ENCODE measurements at regions of chr16 and their contacts with region 1.

Region 1: DNA sequence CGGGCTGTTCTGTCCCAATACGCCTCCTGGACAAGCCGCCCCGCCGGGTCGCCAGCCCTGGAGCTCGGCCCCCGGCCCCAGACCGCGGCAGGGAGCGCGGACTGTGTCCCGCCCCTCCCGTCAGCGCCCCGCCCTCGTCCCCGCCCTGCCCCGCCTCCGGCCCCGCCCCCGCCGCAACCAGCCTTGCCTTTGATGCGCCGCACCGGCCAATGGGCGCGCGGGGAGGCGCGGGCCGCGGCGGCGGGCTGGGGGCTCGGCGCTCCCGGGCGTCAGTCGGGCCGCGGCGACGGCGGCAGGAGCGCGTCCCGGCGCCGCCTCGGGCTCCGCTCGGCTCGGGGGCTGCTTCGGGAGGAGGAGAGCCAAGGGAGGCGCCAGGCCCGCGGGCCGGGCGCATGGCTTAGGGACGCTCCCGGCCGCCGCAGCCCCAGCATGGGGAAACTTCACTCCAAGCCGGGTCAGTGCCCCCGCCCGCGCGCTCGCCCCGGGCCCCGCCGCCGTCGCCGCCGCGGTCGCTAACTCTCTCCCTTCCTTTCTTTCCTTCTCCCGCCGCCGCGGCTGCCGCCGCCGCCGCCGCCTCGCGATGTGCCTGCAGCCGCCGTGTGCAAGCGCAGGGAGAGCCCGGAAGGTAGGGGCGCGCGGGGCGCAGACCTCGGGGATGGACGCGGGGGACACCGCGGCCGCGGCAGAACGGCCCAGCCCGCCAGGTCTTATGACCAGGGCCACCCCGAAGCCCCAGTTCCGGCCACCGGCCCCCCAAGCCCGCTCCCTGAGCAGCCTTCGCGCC is at the start of gene NKD1:
- DNase-seq: peak; percentile 72
- ATAC-seq: peak; percentile 88
- H3K4me3 Mint-ChIP-seq: peak within 1 kb of the TSS; percentile 91
- H3K27ac Mint-ChIP-seq: peak within 1 kb of the TSS; percentile 70
- H3K4me1 Mint-ChIP-seq: peaks cover 7% of the 10 kb centered on the region
- H3K27me3 Mint-ChIP-seq: peaks cover 10% of the 10 kb centered on the region
- CTCF ChIP-seq: no peak
- total RNA-seq, gene NKD1: 0.49 and 1.5 TPM in 2 replicates

Region 2: DNA sequence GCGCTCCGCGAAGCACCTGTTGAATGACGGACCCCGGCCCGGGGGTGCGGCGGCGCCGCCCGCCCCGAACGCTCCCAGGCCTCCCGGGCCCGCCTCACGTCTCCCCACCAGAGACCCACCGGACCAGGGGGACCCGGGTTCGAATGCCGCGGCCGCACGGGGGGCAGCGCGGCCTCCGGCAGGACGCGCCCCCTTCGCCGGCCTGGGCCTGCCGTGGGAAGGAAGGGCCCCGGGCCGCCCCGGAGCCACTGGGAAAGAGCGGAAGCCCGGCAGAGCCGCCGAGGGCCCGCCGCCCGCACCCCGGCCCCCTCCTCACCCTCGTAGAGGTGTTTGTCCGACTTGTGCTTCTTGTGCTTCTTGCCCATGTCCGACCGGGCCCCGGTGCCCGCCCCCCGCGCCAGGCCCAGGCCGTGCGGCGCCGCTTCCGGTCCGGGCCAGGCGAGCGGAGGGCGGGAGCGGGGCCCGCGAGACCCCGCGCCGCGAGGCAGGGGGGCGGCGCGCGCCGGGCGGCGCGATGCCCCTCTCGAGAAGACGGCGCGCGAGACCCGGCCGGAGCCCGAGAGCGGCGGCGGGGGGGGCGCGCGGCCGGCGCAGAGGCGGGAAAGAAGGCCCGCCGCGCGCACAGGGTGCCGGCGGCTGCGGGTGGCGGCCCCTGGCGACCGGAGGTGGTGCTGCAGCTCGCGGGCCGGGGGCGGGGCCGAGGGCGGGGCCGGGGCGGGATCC is 179.7 kb before region 1 on chr16 and contains the start of gene BRD7:
- CTCF ChIA-PET with region 1: no interaction called
- POLR2A ChIA-PET with region 1: no interaction called
- intact Hi-C with region 1: loop called (anchors 1 kb)
- DNase-seq: peak; percentile 79
- ATAC-seq: peak; percentile 89
- H3K4me3 Mint-ChIP-seq: peak within 1 kb of the TSS; percentile 92
- H3K27ac Mint-ChIP-seq: peak within 1 kb of the TSS; percentile 90
- H3K4me1 Mint-ChIP-seq: peaks cover 47% of the 10 kb centered on the region
- H3K27me3 Mint-ChIP-seq: peaks cover 4% of the 10 kb centered on the region
- CTCF ChIP-seq: no peak
- total RNA-seq, gene BRD7: 60.3 and 65.2 TPM in 2 replicates

Region 3: DNA sequence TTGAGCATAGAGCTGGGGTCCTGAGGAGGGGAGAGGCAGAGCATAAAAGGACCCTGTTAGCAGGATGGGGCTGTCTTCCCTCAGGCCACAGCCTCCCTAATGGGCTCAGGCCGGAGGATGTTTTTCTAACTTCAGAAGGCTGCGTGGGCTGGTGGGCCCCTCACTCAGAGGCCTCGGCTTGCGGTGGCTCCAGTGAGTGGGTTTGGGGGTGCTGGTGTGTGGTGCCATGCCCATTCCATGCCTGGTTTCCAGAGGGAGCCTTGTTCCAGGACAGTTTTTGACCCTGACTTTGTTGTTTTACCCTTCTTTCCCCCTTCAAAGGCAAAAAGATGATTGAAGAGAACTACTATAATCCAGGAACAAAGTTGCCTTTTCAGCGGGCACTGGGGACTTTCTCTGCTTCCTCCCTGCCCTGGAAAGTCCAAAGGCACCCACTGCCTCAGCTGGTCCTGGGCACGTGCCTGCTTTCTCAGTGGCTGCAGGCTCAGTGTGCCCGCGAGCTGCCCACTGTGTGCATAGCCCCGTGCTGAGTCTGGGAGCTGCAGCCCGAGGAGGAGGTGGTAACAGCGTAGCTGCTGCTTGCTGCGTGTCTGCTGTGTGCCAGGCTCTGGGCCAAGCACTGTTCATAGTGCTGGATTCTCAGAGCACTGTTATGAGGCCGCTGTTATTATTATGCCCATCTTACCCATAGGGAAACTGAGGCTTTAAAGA is 11.6 kb after region 1 on chr16:
- CTCF ChIA-PET with region 1: no interaction called
- POLR2A ChIA-PET with region 1: no interaction called
- intact Hi-C with region 1: no loop called
- DNase-seq: no peak
- ATAC-seq: no peak
- H3K4me3 Mint-ChIP-seq: no peak overlapping the region
- H3K27ac Mint-ChIP-seq: no peak overlapping the region
- H3K4me1 Mint-ChIP-seq: peaks cover 4% of the 10 kb centered on the region
- H3K27me3 Mint-ChIP-seq: peaks cover 4% of the 10 kb centered on the region
- CTCF ChIP-seq: no peak

Region 4: DNA sequence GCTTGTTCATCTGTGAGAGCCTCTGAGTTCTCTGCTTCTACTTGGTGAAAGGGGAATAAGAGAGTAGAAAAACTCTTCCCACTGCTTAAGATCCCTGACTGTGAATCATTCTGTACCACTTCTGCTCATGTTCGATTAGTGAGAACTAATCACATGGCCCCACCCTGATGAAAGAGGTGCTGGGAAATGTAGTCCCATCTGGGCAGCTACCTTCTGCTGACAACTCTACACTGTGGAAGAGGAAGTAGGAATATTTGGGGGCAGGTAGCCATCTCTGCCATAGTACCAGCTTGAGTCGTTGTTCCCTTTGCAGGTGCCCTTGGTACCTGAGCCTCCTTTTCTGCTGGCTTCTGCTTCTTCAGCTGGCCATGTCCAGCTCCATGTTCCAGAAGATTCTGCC is 29.8 kb after region 1 on chr16:
- CTCF ChIA-PET with region 1: no interaction called
- POLR2A ChIA-PET with region 1: no interaction called
- intact Hi-C with region 1: no loop called
- DNase-seq: no peak
- ATAC-seq: peak; percentile 96
- H3K4me3 Mint-ChIP-seq: no peak overlapping the region
- H3K27ac Mint-ChIP-seq: no peak overlapping the region
- H3K4me1 Mint-ChIP-seq: peaks cover 7% of the 10 kb centered on the region
- H3K27me3 Mint-ChIP-seq: no peaks in the 10 kb centered on the region
- CTCF ChIP-seq: no peak

Region 5: DNA sequence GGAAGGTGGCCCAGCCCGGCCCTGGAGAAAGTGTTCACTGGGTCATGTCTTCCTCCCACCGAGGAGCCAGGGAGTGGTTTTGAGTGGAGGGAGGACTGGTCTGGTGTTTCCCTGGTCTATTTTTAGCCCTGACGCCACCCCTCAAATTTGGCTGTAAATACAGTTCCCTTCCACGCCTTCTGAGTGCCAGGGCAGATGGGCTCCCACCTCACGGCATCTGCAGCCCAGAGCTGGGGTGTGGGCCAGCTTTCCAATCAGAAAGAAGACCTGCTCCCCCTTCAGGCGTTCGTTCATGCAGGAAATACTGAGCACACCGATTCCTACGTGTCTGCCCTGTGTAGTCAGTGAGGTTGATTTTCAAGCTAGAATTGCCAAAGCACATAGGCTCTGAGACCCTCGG is 79.1 kb after region 1 on chr16:
- CTCF ChIA-PET with region 1: interaction called, 4 read pairs
- POLR2A ChIA-PET with region 1: no interaction called
- intact Hi-C with region 1: loop called (anchors 1 kb)
- DNase-seq: no peak
- ATAC-seq: peak; percentile 62
- H3K4me3 Mint-ChIP-seq: peak overlapping the region; percentile 35
- H3K27ac Mint-ChIP-seq: no peak overlapping the region
- H3K4me1 Mint-ChIP-seq: peaks cover 10% of the 10 kb centered on the region
- H3K27me3 Mint-ChIP-seq: no peaks in the 10 kb centered on the region
- CTCF ChIP-seq: no peak

Region 6: GRCh38 chr16:50665128-50665878 is 117.0 kb after region 1 on chr16:
- CTCF ChIA-PET with region 1: interaction called, 12 read pairs
- POLR2A ChIA-PET with region 1: interaction called, 3 read pairs
- intact Hi-C with region 1: loop called (anchors 1 kb)
- DNase-seq: peak; percentile 68
- ATAC-seq: peak; percentile 70
- H3K4me3 Mint-ChIP-seq: peak overlapping the region; percentile 81
- H3K27ac Mint-ChIP-seq: peak overlapping the region; percentile 65
- H3K4me1 Mint-ChIP-seq: peaks cover 23% of the 10 kb centered on the region
- H3K27me3 Mint-ChIP-seq: no peaks in the 10 kb centered on the region
- CTCF ChIP-seq: no peak

Region 7: DNA sequence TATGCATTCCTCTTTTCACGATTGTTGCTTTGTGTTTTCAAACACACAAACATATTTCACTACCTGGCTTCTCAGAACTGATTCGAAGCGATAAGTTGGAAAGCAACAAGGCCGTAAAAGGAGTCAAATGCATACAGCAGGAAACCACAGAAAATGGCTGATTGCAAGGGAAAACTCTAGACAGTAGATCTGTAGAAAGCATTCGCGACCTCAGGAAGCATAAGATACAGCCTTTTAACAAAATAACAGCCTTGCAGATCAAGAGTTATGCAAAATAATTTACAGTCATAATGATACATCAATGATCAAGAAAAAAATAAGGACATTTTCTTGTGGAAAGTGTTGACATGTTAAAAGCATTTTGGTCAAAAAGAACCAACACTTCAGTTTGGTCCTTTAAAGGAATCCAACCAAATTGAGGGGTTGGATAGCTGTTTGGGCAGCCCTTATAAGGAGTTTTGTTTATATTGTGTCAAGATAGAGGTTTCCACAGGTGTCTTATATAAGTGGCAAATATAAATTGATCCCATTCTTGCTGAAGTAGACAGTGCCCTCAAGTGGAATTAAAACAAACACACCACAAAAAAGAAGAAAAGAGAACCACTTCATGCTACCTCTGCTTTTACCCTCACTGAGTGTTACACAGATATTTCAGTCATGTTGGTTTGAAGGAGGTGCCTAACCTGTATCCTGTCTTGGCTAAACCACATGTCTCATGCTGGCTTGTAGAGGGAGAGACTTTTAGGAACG is 199.1 kb after region 1 on chr16:
- CTCF ChIA-PET with region 1: interaction called, 3 read pairs
- POLR2A ChIA-PET with region 1: no interaction called
- intact Hi-C with region 1: loop called (anchors 1 kb)
- DNase-seq: no peak
- ATAC-seq: peak; percentile 61
- H3K4me3 Mint-ChIP-seq: peak overlapping the region; percentile 45
- H3K27ac Mint-ChIP-seq: peak overlapping the region; percentile 11
- H3K4me1 Mint-ChIP-seq: peaks cover 53% of the 10 kb centered on the region
- H3K27me3 Mint-ChIP-seq: no peaks in the 10 kb centered on the region
- CTCF ChIP-seq: no peak